Activated CD4-positive, alpha-beta T cell treated with anti-CD3 and anti-CD28 coated beads, Interleukin-2, amount 10 ng/mL, durations not matched to agents 24 days and 14 days (primary cell): ENCODE measurements at regions of chr3 and their contacts with region 1.

Region 1: GRCh38 chr3:9362731-9363530 is at the start of gene THUMPD3:
- DNase-seq: peak; percentile 98
- H3K4me3 Mint-ChIP-seq: peak within 1 kb of the TSS; percentile 92
- H3K27ac Mint-ChIP-seq: peak within 1 kb of the TSS; percentile 99
- H3K4me1 Mint-ChIP-seq: peaks cover 19% of the 10 kb centered on the region
- H3K27me3 Mint-ChIP-seq: peaks cover 3% of the 10 kb centered on the region
- total RNA-seq, gene THUMPD3: 58.6 and 64.2 TPM in 2 replicates

Region 2: GRCh38 chr3:8938021-8938420 is 424.9 kb before region 1 on chr3:
- intact Hi-C with region 1: no loop called
- DNase-seq: no peak
- H3K4me3 Mint-ChIP-seq: no peak overlapping the region
- H3K27ac Mint-ChIP-seq: no peak overlapping the region
- H3K4me1 Mint-ChIP-seq: peaks cover 2% of the 10 kb centered on the region
- H3K27me3 Mint-ChIP-seq: no peaks in the 10 kb centered on the region

Region 3: GRCh38 chr3:8963137-8963869 is 399.6 kb before region 1 on chr3 and contains the start of gene RAD18:
- intact Hi-C with region 1: loop called (anchors 5 kb)
- DNase-seq: peak; percentile 98
- H3K4me3 Mint-ChIP-seq: peak within 1 kb of the TSS; percentile 94
- H3K27ac Mint-ChIP-seq: peak within 1 kb of the TSS; percentile 94
- H3K4me1 Mint-ChIP-seq: peaks cover 29% of the 10 kb centered on the region
- H3K27me3 Mint-ChIP-seq: peaks cover 2% of the 10 kb centered on the region
- total RNA-seq, gene RAD18: 52.8 and 55.1 TPM in 2 replicates

Region 4: GRCh38 chr3:9422712-9423424 is 59.9 kb after region 1 on chr3:
- intact Hi-C with region 1: loop called (anchors 2 kb)
- DNase-seq: no peak
- H3K4me3 Mint-ChIP-seq: no peak overlapping the region
- H3K27ac Mint-ChIP-seq: peak overlapping the region; percentile 65
- H3K4me1 Mint-ChIP-seq: peaks cover 33% of the 10 kb centered on the region
- H3K27me3 Mint-ChIP-seq: no peaks in the 10 kb centered on the region

Region 5: DNA sequence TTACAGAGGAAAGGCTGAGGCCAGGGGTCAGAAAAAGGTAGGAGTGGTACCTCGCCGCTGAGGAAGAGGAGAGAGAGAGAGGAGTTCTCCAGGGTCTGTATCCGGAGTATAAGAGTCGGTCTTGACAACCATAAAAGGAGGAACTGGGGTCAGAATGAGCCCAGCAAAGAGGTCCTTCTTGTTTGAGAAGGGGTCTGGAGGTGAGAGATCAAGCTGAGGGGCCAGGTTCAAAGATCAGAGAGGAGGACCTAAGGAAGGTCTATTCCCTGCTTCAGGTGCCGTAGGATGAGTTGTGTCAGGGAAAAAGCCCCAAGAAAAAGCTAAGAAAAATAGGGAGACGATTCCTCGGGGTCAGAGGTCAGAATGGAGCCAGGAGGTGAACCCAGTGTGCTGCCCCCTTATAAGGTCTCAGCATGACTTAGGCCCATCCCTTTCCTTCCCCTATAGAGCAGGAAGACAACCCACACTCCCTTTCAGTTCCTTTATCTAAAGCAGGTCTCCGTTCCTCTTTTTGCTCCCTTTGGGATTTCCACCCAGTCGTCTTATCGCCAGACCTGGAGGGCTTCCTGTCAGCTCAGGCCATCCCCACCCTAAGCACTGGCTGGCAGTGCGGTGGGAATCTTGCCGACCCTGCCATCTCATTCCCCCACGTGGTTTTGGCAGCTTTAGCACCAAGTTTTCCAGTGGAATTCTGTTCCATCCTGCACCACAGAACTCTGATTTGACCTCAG is 287.0 kb after region 1 on chr3:
- intact Hi-C with region 1: loop called (anchors 2 kb)
- DNase-seq: peak; percentile 71
- H3K4me3 Mint-ChIP-seq: peak overlapping the region; percentile 99
- H3K27ac Mint-ChIP-seq: peak overlapping the region; percentile 92
- H3K4me1 Mint-ChIP-seq: peaks cover 17% of the 10 kb centered on the region
- H3K27me3 Mint-ChIP-seq: peaks cover 2% of the 10 kb centered on the region